PC-3 (cell line): ENCODE measurements at regions of chr10 and their contacts with region 1.

Region 1: GRCh38 chr10:22259280-22259679 is 41.5 kb upstream of the EBLN1 start:
- DNase-seq: peak; percentile 11
- ATAC-seq: peak; percentile 42
- H3K4me3 ChIP-seq: no peak overlapping the region
- H3K27ac ChIP-seq: no peak overlapping the region
- H3K4me1 ChIP-seq: no peaks in the 10 kb centered on the region; the same call in 1 of the 2 replicates
- H3K27me3 ChIP-seq: no peaks in the 10 kb centered on the region
- CTCF ChIP-seq: 0 out of 2 replicates have a peak, but pooled peaks have one; percentile 9

Region 2: GRCh38 chr10:22340362-22341189 is 81.3 kb after region 1 on chr10:
- CTCF ChIA-PET with region 1: no interaction called
- POLR2A ChIA-PET with region 1: interaction called, 12 read pairs
- intact Hi-C with region 1: no loop called
- DNase-seq: peak; percentile 54
- ATAC-seq: peak; percentile 72
- H3K4me3 ChIP-seq: peak overlapping the region; percentile 91
- H3K27ac ChIP-seq: peak overlapping the region; percentile 89
- H3K4me1 ChIP-seq: peaks cover 22% of the 10 kb centered on the region
- H3K27me3 ChIP-seq: no peaks in the 10 kb centered on the region
- CTCF ChIP-seq: no peak